Mammary epithelial cell (primary cell): ENCODE measurements at regions of chr2 and their contacts with region 1.

Region 1: DNA sequence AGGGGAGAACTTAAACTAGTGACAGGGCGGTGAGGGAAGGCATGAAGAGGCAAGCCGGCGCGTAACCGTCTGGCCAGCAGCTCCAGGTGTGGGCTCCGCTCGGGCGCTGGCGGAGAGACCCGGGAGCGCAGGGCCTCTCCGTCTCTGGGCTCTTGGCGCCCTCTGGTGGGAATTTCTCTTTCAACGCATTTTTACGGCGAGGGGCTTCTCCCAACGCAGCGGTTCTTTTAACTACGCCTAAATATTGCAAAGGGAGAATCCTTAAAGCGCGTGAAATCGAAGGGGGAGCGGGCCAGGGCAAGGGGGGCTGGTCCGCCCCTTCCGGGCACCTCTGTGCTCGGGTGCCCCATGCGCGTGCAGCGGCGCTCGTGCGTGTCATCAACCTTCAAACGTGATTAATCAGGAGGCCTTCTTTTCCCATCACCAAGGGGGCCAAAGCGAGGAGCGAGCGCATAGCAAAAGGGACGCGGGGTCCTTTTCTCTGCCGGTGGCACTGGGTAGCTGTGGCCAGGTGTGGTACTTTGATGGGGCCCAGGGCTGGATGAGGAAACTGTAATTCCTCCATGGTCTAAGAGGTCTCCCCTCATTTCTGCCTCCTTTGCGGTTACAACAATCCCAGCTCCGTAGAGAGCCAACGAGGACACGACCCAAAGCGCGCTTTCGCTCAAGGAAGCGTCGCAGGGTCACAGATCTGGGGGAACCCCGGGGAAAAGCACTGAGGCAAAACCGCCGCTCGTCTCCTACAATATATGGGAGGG is 762 bp upstream of the GAD1 start:
- DNase-seq: peak; percentile 64
- H3K4me3 ChIP-seq: peak overlapping the region; percentile 24 to 50 (median 48)
- H3K27ac ChIP-seq: no peak overlapping the region
- H3K4me1 ChIP-seq: peaks cover 29% of the 10 kb centered on the region
- H3K27me3 ChIP-seq: peaks cover 46% of the 10 kb centered on the region
- CTCF ChIP-seq: peak; percentile 44 to 79

Region 2: DNA sequence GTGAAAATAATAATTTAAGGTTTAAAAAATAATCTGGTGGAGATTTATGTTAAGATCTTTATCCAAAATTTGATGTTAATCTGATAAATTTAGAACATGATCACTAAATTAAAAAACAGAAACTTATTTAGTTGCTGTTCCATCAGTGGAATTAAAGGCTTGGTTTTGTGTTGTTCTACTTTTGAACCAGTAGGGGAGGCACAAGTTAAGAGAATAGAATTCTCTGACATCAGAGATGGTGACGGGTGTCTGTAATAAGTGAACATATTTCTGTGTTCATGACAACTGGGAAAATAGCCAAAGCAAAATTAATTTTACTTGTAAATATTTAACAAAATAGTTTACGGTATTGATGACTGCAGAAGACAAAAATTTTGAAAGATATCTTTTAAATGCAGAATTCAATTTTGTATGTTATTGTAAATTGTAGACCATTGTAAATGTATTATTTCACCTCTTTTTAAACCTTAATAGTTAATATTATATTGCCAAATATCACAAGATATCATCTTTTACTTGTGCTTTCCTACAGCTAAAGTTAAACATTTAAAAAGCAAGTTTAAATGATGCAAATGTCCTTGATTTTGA is 882.7 kb before region 1 on chr2:
- CTCF ChIA-PET with region 1: no interaction called
- dilution Hi-C with region 1: no loop called
- in situ Hi-C with region 1: no loop called
- intact Hi-C with region 1: loop called (anchors 5 kb)
- DNase-seq: peak; percentile 12
- H3K4me3 ChIP-seq: no peak overlapping the region
- H3K27ac ChIP-seq: no peak overlapping the region
- H3K4me1 ChIP-seq: no peaks in the 10 kb centered on the region
- H3K27me3 ChIP-seq: no peaks in the 10 kb centered on the region
- CTCF ChIP-seq: peak; percentile 61 to 76

Region 3: DNA sequence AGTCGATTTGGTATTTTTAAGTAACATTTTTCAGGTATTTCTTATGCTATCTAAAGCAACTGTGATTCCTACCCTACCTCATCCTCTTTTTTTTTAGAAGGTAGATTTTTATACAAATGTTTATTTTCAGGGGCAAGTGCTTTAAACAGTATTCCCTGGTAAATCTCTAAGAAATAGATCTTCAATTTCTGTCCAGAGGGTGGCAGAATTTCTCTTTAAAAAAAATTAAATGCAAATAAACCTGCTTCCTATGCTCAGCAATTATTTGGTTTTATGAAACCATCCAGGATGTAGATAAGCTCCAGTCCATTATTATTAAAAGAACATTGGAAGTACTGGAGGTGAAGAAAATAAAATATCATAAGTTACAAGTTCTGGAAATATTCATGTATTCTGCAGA is 446.0 kb before region 1 on chr2:
- CTCF ChIA-PET with region 1: no interaction called
- dilution Hi-C with region 1: no loop called
- in situ Hi-C with region 1: loop called in 1 of 2 experiments (anchors 10 kb)
- intact Hi-C with region 1: loop called (anchors 1 kb)
- DNase-seq: peak; percentile 20
- H3K4me3 ChIP-seq: no peak overlapping the region
- H3K27ac ChIP-seq: no peak overlapping the region
- H3K4me1 ChIP-seq: peaks cover 11% of the 10 kb centered on the region
- H3K27me3 ChIP-seq: peaks cover 7% of the 10 kb centered on the region
- CTCF ChIP-seq: peak in 1 of 2 donors; percentile 35

Region 4: DNA sequence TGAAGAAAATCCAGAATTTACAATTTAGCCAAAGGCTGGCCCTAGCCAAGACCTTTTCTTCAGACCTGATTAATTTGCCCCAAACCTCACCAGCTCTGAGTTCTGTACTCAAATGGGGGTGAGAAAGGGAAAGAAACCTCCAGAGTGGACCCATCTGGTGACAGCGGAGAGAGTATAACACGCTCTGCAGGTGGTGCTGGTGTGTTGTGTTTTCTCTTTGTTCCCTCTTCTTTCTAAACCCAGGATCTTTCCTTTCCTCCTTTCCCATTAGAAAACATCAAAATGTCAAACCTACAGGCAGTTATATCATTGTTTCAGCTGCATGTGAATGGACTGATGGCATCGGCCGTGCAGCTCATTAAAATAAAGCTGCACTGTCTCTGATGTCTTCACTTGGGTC is 354.0 kb before region 1 on chr2:
- CTCF ChIA-PET with region 1: no interaction called
- dilution Hi-C with region 1: no loop called
- in situ Hi-C with region 1: no loop called
- intact Hi-C with region 1: loop called (anchors 1 kb)
- DNase-seq: no peak
- H3K4me3 ChIP-seq: no peak overlapping the region
- H3K27ac ChIP-seq: no peak overlapping the region
- H3K4me1 ChIP-seq: no peaks in the 10 kb centered on the region
- H3K27me3 ChIP-seq: no peaks in the 10 kb centered on the region
- CTCF ChIP-seq: peak in 1 of 2 donors; percentile 15

Region 5: GRCh38 chr2:170739048-170739447 is 76.9 kb before region 1 on chr2:
- CTCF ChIA-PET with region 1: no interaction called
- dilution Hi-C with region 1: no loop called
- in situ Hi-C with region 1: no loop called
- intact Hi-C with region 1: loop called (anchors 1 kb)
- DNase-seq: peak; percentile 96
- H3K4me3 ChIP-seq: no peak overlapping the region
- H3K27ac ChIP-seq: peak overlapping the region; percentile 98
- H3K4me1 ChIP-seq: peaks cover 31% of the 10 kb centered on the region
- H3K27me3 ChIP-seq: no peaks in the 10 kb centered on the region
- CTCF ChIP-seq: no peak

Region 6: DNA sequence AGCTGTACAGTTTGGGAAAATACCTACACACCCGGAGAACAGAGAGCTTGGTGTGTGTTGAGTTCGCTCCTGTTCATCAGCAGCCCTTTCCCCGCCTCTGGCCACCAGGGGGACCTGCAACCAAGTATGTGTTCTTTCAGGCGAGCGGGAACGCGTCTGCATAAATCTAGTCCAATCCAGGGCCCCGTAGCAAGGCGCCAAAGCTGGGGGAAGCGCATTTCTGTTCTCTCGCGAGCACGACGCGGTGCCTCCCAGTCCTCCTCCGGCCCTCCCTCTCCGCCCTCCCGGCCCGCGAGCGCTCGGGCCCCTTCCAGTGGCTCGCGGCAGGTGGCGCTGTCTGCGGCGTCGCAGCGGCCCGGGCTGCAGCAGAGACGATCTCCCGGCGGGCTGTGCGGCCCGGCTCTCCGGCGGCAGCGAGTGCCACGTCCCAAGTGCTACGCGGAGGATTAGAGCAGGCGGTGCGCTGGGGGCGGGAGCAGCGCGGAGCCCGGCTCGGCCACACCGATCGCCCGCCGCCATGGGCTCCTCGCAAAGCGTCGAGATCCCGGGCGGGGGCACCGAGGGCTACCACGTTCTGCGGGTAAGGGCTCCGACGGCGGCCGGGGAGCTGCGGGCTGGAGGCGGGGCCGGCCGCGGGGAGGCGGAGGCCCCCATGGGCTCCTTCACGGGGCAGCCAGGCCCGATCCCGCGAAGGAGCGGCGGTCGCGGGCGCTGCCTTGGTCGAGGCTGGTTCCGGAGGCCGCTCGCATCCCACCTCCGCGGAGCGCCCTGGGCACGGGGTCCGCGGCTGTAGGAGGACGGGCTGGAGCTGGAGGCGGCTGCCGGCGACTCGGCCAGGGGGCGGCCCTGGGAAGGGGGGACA is 113.1 kb after region 1 on chr2 and contains the start of gene GORASP2:
- CTCF ChIA-PET with region 1: no interaction called
- dilution Hi-C with region 1: no loop called
- in situ Hi-C with region 1: no loop called
- intact Hi-C with region 1: loop called (anchors 1 kb)
- DNase-seq: peak; percentile 99
- H3K4me3 ChIP-seq: peak within 1 kb of the TSS; percentile 54 to 86 (median 85)
- H3K27ac ChIP-seq: peak within 1 kb of the TSS; percentile 89
- H3K4me1 ChIP-seq: peaks cover 14% of the 10 kb centered on the region
- H3K27me3 ChIP-seq: no peaks in the 10 kb centered on the region
- CTCF ChIP-seq: peak; percentile 85
- total RNA-seq, gene GORASP2: 63.3 to 94.9 TPM